ENCODE measurements at regions of chr1 and their contacts with region 1.

Region 1: GRCh38 chr1:226100436-226101391 is 38.2 kb downstream of the H3-3A start:
- DNase-seq: peak in 1 of 5 donors; percentile 53
- H3K4me3 ChIP-seq: peak overlapping the region; percentile 34
- H3K27ac ChIP-seq: no peak overlapping the region
- H3K4me1 ChIP-seq: peaks cover 2% of the 10 kb centered on the region
- H3K27me3 ChIP-seq: no peaks in the 10 kb centered on the region
- CTCF ChIP-seq: no peak
- EP300 ChIP-seq: no peak
- POLR2A ChIP-seq: no peak

Region 2: DNA sequence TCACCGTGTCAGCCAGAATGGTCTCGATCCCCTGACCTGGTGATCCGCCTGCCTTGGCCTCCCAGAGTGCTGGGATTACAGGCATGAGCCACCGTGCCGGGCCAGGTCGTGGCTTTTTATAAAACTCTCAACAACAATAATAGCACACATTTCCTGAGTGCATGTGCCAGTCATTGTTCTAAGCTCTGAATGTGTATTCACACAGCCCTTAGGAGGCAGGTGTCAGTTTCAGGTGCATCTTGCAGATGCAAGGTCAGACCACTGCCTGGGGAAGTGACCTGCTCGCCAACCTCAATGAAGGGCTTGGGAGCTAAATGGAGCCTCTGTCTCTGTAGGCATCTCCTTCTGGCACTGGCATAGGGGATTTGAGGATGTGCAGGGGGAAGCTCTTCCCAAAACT is 158.1 kb before region 1 on chr1:
- intact Hi-C with region 1: no loop called
- DNase-seq: no peak
- H3K4me3 ChIP-seq: no peak overlapping the region
- H3K27ac ChIP-seq: no peak overlapping the region
- H3K4me1 ChIP-seq: peaks cover 16% of the 10 kb centered on the region
- H3K27me3 ChIP-seq: no peaks in the 10 kb centered on the region
- CTCF ChIP-seq: no peak
- EP300 ChIP-seq: no peak
- POLR2A ChIP-seq: no peak

Region 3: DNA sequence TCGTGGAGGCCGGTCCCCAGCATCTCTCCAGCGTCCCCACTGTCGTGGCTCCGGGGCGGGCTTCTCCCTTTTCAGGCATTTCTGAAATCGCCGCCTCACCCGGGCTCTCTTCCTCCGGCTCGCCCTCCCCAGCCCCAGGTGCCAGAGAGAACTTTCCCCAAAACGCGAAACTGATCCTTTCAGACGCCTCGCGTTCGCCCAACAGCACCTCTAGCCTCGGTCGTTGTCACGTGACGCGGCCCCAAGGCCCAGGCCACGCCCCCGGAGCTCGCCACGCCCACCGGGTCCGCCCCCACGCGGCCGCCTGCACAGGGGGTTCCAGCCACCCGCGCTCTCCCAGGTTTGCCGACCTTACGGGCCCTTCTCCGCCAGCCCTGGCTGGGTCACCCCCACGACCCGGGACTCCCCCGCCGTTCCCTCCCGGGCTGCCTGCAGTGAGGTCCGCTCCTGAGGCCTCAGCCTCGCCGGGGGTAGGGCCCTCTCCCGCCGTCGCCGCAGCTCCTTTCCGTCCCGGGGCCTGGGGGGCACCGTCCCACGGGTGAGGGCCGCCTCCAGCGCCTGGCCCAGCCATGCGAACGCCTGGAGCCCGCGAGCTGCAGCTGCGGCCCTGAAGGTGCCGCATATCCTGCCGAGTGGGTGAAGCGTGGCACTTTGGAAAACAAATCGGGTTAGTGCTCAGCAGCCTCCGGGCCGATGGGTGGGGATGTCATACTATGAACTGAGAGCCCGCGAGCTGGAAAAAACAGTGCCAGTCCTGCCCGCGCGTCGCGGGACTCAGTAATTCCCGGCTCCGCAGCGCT is 17.2 kb before region 1 on chr1:
- intact Hi-C with region 1: loop called in 1 of 4 experiments (anchors 2 kb)
- DNase-seq: peak; percentile 92 to 96 (median 95)
- H3K4me3 ChIP-seq: peak overlapping the region; percentile 53
- H3K27ac ChIP-seq: peak overlapping the region; percentile 15 to 84
- H3K4me1 ChIP-seq: peaks cover 2% of the 10 kb centered on the region
- H3K27me3 ChIP-seq: no peaks in the 10 kb centered on the region
- CTCF ChIP-seq: no peak
- EP300 ChIP-seq: no peak
- POLR2A ChIP-seq: peak; percentile 62

Measured in ovary (tissue), 10 donors.